CD8-positive, alpha-beta memory T cell (primary cell): ENCODE measurements at regions of chr6 and their contacts with region 1.

Region 1: DNA sequence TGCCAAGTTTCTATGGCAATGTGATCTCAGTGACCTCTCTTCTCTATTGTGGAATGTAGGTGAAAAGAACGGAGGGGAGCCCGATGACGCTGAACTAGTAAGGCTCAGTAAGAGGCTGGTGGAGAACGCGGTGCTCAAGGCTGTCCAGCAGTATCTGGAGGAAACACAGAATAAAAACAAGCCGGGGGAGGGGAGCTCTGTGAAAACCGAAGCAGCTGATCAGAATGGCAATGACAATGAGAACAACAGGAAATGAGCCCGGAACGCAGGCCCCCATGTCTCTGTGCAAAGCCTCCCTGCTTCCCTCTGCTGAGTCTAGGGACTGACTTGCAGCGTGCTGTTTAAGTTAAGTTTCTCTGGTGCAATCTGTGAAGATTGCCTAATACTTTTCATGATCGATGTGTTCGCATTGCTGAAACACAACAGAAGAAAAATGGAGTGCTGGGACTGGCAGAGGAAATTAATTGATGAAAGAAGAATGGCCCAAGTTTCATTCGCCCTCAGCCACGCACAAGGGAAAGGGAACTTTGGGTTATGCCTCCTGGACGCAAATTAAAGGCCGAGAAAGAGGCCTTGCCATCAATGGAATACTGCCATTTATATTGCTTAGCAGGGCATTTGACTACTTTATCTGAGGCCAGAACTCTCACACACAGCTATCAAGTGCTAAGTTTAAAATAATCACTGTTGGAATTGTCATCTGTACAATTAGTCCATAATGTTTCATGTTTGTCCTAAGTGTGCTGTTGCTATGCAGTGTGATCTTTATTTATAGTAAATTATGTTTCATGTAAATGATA is 146.4 kb downstream of the AKAP7 start:
- DNase-seq: peak; percentile 25 to 83 (median 62)
- H3K4me3 ChIP-seq: peak overlapping the region; percentile 27
- H3K4me3 Mint-ChIP-seq: peak overlapping the region; percentile 2 to 87 (median 81)
- H3K27ac ChIP-seq: peak overlapping the region; percentile 21
- H3K27ac Mint-ChIP-seq: peak overlapping the region; percentile 58 to 98 (median 93)
- H3K4me1 ChIP-seq: peaks cover 41% of the 10 kb centered on the region
- H3K4me1 Mint-ChIP-seq: peaks cover 31 to 42% (median 41%) of the 10 kb centered on the region in 3 donors
- H3K27me3 ChIP-seq: no peaks in the 10 kb centered on the region
- H3K27me3 Mint-ChIP-seq: no peaks in the 10 kb centered on the region

Region 2: GRCh38 chr6:131038597-131039344 is 242.9 kb before region 1 on chr6:
- CTCF ChIA-PET with region 1: no interaction called
- POLR2A ChIA-PET with region 1: no interaction called
- DNase-seq: no peak
- H3K4me3 ChIP-seq: no peak overlapping the region
- H3K4me3 Mint-ChIP-seq: no peak overlapping the region
- H3K27ac ChIP-seq: no peak overlapping the region
- H3K27ac Mint-ChIP-seq: no peak overlapping the region
- H3K4me1 ChIP-seq: no peaks in the 10 kb centered on the region
- H3K4me1 Mint-ChIP-seq: no peaks in the 10 kb centered on the region
- H3K27me3 ChIP-seq: no peaks in the 10 kb centered on the region
- H3K27me3 Mint-ChIP-seq: no peaks in the 10 kb centered on the region

Region 3: DNA sequence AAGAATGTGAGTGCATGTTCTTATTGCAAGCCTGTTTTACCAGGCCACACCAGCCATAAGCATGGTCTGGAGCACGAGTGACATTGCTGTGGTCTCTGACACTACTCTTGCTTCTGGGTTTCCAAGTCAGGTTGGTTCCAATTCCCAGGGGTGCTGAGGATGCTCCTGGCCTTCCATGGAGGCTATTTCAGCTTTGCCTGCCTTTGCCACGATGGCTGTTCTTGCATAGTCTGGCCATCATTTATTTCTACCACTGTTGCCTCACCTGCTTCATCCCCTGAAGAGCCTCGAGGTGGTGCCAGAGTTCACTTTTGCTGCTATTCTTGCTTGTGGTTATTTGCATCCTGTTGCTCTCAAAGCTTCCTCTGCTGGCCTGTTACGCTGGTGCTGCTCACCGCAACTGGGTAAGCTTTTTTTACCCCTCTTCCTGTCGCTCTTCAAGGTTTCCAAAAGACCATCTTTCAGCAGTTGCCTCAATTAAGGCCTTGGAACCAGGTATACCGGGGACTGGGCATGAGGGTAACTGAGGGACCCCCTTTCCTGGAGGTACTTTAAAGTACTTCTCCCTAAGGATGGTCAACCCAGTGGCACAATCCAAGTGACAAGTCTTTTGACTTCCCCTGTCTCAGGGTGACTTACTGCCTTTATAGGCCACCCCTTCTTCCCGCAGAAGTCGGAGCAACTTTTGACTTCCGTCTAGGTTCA is 82.0 kb before region 1 on chr6:
- CTCF ChIA-PET with region 1: interaction called, 11 read pairs
- POLR2A ChIA-PET with region 1: interaction called, 19 read pairs
- DNase-seq: peak; percentile 42 to 88 (median 84)
- H3K4me3 ChIP-seq: peak overlapping the region; percentile 37
- H3K4me3 Mint-ChIP-seq: peak overlapping the region; percentile 83 to 89 (median 86)
- H3K27ac ChIP-seq: peak overlapping the region; percentile 66
- H3K27ac Mint-ChIP-seq: peak overlapping the region; percentile 89 to 99 (median 96)
- H3K4me1 ChIP-seq: peaks cover 60% of the 10 kb centered on the region
- H3K4me1 Mint-ChIP-seq: peaks cover 59 to 64% (median 61%) of the 10 kb centered on the region in 3 donors
- H3K27me3 ChIP-seq: no peaks in the 10 kb centered on the region
- H3K27me3 Mint-ChIP-seq: no peaks in the 10 kb centered on the region

Region 4: GRCh38 chr6:131269565-131270391 is 11.9 kb before region 1 on chr6:
- CTCF ChIA-PET with region 1: interaction called, 3 read pairs
- POLR2A ChIA-PET with region 1: interaction called, 10 read pairs
- DNase-seq: no peak
- H3K4me3 ChIP-seq: no peak overlapping the region
- H3K4me3 Mint-ChIP-seq: no peak overlapping the region
- H3K27ac ChIP-seq: no peak overlapping the region
- H3K27ac Mint-ChIP-seq: no peak overlapping the region
- H3K4me1 ChIP-seq: no peaks in the 10 kb centered on the region
- H3K4me1 Mint-ChIP-seq: peaks cover 2 to 20% (median 14%) of the 10 kb centered on the region in 3 donors
- H3K27me3 ChIP-seq: no peaks in the 10 kb centered on the region
- H3K27me3 Mint-ChIP-seq: peaks cover 0 to 2% of the 10 kb centered on the region in 2 donors

Region 5: GRCh38 chr6:131293472-131293911 is 11.8 kb after region 1 on chr6:
- CTCF ChIA-PET with region 1: interaction called, 4 read pairs
- POLR2A ChIA-PET with region 1: interaction called, 10 read pairs
- DNase-seq: no peak
- H3K4me3 ChIP-seq: no peak overlapping the region
- H3K4me3 Mint-ChIP-seq: no peak overlapping the region
- H3K27ac ChIP-seq: no peak overlapping the region
- H3K27ac Mint-ChIP-seq: peak overlapping the region in 1 of 8 donors; percentile 64
- H3K4me1 ChIP-seq: peaks cover 18% of the 10 kb centered on the region
- H3K4me1 Mint-ChIP-seq: peaks cover 9 to 20% (median 12%) of the 10 kb centered on the region in 3 donors
- H3K27me3 ChIP-seq: no peaks in the 10 kb centered on the region
- H3K27me3 Mint-ChIP-seq: no peaks in the 10 kb centered on the region

Region 6: GRCh38 chr6:131303338-131303954 is 21.8 kb after region 1 on chr6:
- CTCF ChIA-PET with region 1: no interaction called
- POLR2A ChIA-PET with region 1: interaction called, 10 read pairs
- DNase-seq: no peak
- H3K4me3 ChIP-seq: no peak overlapping the region
- H3K4me3 Mint-ChIP-seq: no peak overlapping the region
- H3K27ac ChIP-seq: no peak overlapping the region
- H3K27ac Mint-ChIP-seq: peak overlapping the region in 2 of 8 donors; percentile 12 to 38
- H3K4me1 ChIP-seq: no peaks in the 10 kb centered on the region
- H3K4me1 Mint-ChIP-seq: peaks cover 9 to 16% (median 12%) of the 10 kb centered on the region in 3 donors
- H3K27me3 ChIP-seq: no peaks in the 10 kb centered on the region
- H3K27me3 Mint-ChIP-seq: peaks cover 0 to 3% of the 10 kb centered on the region in 2 donors

Region 7: GRCh38 chr6:131368198-131368911 is 86.7 kb after region 1 on chr6:
- CTCF ChIA-PET with region 1: no interaction called
- POLR2A ChIA-PET with region 1: no interaction called
- DNase-seq: no peak
- H3K4me3 ChIP-seq: no peak overlapping the region
- H3K4me3 Mint-ChIP-seq: no peak overlapping the region
- H3K27ac ChIP-seq: no peak overlapping the region
- H3K27ac Mint-ChIP-seq: peak overlapping the region in 1 of 8 donors; percentile 56
- H3K4me1 ChIP-seq: no peaks in the 10 kb centered on the region
- H3K4me1 Mint-ChIP-seq: peaks cover 0 to 16% (median 3%) of the 10 kb centered on the region in 3 donors
- H3K27me3 ChIP-seq: no peaks in the 10 kb centered on the region
- H3K27me3 Mint-ChIP-seq: peaks cover 0 to 1% of the 10 kb centered on the region in 2 donors